Lower lobe of right lung (tissue), 2 donors: ENCODE measurements at regions of chr14 and their contacts with region 1.

Region 1: GRCh38 chr14:31078766-31079165 is 52.6 kb upstream of the STRN3 start:
- DNase-seq: no peak
- ATAC-seq: no peak
- H3K4me3 ChIP-seq: no peak overlapping the region
- H3K27ac ChIP-seq: no peak overlapping the region
- H3K4me1 ChIP-seq: no peaks in the 10 kb centered on the region
- H3K27me3 ChIP-seq: no peaks in the 10 kb centered on the region
- CTCF ChIP-seq: no peak

Region 2: DNA sequence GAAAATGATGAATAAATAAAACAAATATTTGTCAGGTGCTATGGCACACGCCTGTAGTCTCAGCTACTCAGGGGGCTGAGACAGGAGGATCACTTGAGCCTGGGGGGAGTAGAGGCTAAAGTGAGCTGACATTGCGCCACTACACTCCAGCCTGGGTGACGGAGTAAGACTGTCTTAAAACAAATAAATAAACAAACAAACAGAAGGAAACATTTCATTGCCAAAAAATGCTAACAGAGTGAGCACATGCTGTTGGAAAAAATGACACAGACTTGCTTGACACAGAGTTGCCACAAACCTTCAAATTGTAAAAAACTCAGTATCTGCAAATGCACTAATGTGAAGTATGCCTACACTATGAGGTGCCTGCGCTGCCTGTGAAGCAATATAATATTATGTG is 104.1 kb before region 1 on chr14:
- intact Hi-C with region 1: loop called (anchors 5 kb)
- DNase-seq: no peak
- ATAC-seq: peak; percentile 32 to 69
- H3K4me3 ChIP-seq: no peak overlapping the region
- H3K27ac ChIP-seq: no peak overlapping the region
- H3K4me1 ChIP-seq: peaks cover 44% of the 10 kb centered on the region
- H3K27me3 ChIP-seq: no peaks in the 10 kb centered on the region
- CTCF ChIP-seq: no peak

Region 3: DNA sequence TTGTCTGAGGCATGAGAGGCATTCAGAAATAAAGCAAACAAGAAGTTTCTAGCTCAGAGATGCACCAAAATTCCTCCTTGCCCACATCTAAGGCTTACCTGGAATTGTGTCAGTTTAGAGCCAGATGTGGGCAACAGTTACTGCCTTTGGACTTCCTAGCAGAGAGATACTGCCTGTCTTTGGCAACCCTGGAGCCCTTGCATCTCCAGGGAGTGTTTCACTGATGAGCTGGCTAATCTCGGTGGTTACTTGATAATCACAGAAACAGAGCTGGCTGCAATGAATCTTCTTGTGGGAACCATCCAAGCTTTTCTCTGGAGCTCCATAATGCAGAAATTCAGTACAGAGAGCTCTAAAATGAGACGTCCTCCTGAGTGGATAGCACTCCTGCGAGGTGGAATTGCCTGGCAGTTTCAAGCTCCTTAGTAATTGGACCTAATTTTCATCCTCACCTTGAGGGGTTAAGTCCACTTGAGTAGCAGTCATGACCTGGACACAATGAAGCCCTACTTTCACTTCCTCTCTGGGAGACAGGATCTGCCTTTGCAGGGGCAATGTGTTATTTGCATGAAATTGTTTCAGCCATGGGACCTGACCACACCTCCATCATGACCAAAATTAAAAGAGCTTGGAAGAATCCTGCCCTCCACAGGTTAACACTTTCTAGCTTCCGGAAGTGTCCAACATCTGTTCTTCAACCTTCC is 889.5 kb after region 1 on chr14:
- intact Hi-C with region 1: no loop called
- DNase-seq: no peak
- ATAC-seq: no peak
- H3K4me3 ChIP-seq: no peak overlapping the region
- H3K27ac ChIP-seq: no peak overlapping the region
- H3K4me1 ChIP-seq: peaks cover 6% of the 10 kb centered on the region
- H3K27me3 ChIP-seq: no peaks in the 10 kb centered on the region
- CTCF ChIP-seq: no peak